Stomach (tissue), 19 donors: ENCODE measurements at regions of chr2 and their contacts with region 1.

Region 1: GRCh38 chr2:11411768-11412448 is 54.1 kb downstream of the E2F6 start:
- DNase-seq: peak; percentile 57 to 84
- H3K4me3 ChIP-seq: peak overlapping the region; percentile 26 to 42 (median 40)
- H3K27ac ChIP-seq: peak overlapping the region in 1 of 5 donors; percentile 0
- H3K4me1 ChIP-seq: peaks cover 0 to 14% (median 7%) of the 10 kb centered on the region in 4 donors
- H3K27me3 ChIP-seq: no peaks in the 10 kb centered on the region
- CTCF ChIP-seq: peak in 5 of 7 experiments; percentile 59 to 84 (median 74)
- EP300 ChIP-seq: no peak
- POLR2A ChIP-seq: no peak

Region 2: DNA sequence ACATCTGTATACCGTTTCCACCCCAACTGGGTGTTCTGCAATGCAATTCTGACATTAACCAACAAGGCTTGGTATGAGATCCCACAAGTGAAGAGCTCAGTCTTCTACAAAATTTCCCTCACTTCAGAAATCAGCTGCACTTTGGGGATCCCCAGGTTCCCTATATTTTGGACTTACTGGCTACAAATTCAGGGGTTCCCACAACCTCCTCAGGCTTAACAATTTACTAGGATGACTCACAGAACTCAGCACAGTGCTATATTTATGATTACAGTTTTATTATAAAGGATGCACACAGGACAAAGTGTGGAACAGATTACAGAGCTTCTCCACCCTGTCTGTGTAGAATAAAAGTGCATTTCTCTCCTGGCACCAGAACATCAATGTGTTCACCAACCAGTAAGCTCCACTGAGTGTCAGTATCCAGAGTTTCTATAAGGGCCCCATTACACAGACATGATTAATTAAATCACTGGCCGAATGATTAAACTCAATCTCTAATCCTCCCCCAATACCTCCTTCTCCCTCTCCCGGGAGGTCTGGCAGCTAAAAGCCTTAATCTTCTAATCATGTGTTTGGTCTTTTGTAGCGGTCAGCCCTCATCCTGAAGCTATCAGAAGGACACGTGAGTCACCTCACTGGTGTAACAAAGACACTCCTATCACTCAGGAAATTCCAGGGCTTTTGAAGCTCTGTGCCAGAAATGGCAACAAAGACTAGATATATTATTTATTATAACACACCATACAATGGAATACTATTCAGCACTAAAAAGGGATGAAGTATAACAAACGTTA is 172.0 kb before region 1 on chr2:
- intact Hi-C with region 1: loop called (anchors 5 kb)
- DNase-seq: no peak
- H3K4me3 ChIP-seq: no peak overlapping the region
- H3K27ac ChIP-seq: no peak overlapping the region
- H3K4me1 ChIP-seq: peaks cover 0 to 38% (median 17%) of the 10 kb centered on the region in 4 donors
- H3K27me3 ChIP-seq: no peaks in the 10 kb centered on the region
- CTCF ChIP-seq: no peak
- EP300 ChIP-seq: no peak
- POLR2A ChIP-seq: no peak

Region 3: GRCh38 chr2:11344342-11344955 is 67.5 kb before region 1 on chr2 and contains the start of gene ROCK2:
- intact Hi-C with region 1: loop called (anchors 5 kb)
- DNase-seq: peak; percentile 86 to 95
- H3K4me3 ChIP-seq: peak within 1 kb of the TSS; percentile 82 to 98 (median 90)
- H3K27ac ChIP-seq: peak within 1 kb of the TSS; percentile 96 to 99 (median 97)
- H3K4me1 ChIP-seq: peaks cover 14 to 55% (median 49%) of the 10 kb centered on the region in 4 donors
- H3K27me3 ChIP-seq: no peaks in the 10 kb centered on the region
- CTCF ChIP-seq: no peak
- EP300 ChIP-seq: no peak
- POLR2A ChIP-seq: no peak
- total RNA-seq, gene ROCK2: 31.6 to 113 (median 54.3) TPM